IMR-90 (cell line): ENCODE measurements at regions of chr16 and their contacts with region 1.

Region 1: GRCh38 chr16:78805556-78805955 is 706.1 kb downstream of the WWOX start:
- DNase-seq: no peak
- ATAC-seq: no peak
- H3K4me3 ChIP-seq: no peak overlapping the region
- H3K27ac ChIP-seq: no peak overlapping the region
- H3K4me1 ChIP-seq: no peaks in the 10 kb centered on the region
- H3K27me3 ChIP-seq: no peaks in the 10 kb centered on the region
- CTCF ChIP-seq: no peak
- POLR2A ChIP-seq: no peak
- RAD21 ChIP-seq: no peak

Region 2: DNA sequence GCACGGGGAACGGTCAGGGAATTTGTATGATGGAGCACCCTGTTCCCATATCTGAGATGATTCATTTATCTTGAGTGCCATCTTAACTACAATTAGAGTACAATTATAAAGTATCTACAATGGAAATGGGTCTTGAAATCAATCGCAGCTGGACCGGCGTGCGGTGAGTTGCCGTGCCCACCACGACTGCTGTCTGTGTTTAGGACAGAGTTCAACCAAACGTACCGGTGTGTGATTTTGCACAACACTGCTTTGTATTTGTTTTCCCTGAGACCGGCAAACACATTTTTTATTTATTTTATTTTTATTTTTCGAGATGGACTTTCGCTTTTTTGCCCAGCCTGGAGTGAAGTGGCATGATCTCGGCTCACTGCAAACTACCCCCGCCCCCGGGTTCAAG is 249.1 kb before region 1 on chr16:
- CTCF ChIA-PET with region 1: no interaction called
- POLR2A ChIA-PET with region 1: no interaction called
- dilution Hi-C with region 1: no loop called
- in situ Hi-C with region 1: no loop called
- intact Hi-C with region 1: loop called (anchors 5 kb)
- DNase-seq: no peak
- ATAC-seq: no peak
- H3K4me3 ChIP-seq: no peak overlapping the region
- H3K27ac ChIP-seq: no peak overlapping the region
- H3K4me1 ChIP-seq: no peaks in the 10 kb centered on the region
- H3K27me3 ChIP-seq: no peaks in the 10 kb centered on the region
- CTCF ChIP-seq: no peak
- POLR2A ChIP-seq: no peak
- RAD21 ChIP-seq: no peak

Region 3: DNA sequence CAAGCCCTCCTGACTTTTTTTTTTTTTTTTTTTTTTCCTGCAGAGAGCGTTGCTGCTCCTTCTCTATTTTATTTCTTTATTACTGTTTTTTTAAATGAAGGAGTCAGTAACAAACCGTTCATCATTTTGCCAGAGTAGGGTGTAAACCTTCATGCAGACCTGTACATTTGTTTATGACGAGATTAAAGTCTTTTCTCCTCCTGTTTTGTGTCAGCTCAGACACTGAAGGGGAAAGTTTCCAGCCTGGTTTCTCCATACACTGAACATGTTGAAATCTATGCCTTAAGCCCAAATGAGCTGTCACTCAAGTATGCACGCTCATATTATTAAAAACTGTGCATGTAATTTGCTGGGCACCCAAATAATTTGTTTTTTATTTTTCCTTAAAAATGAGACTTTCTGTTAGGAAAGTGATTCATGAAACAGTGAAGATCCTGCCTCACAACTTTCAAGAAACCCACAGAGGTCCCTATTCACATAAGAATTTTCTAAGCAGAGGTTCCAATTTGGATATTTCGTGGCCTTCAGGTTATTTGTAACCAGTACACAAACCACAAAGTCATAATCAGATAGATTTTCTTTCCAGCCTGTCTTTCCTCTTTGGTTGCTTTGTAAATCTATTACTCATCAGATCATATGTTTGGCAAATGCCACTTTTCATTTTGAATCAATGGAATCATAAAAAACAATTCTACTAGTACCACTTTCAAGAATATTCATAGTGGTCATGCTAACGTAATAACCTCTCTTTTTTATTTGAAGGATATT is 94.7 kb after region 1 on chr16:
- CTCF ChIA-PET with region 1: no interaction called
- POLR2A ChIA-PET with region 1: no interaction called
- dilution Hi-C with region 1: no loop called
- in situ Hi-C with region 1: no loop called
- intact Hi-C with region 1: no loop called
- DNase-seq: no peak
- ATAC-seq: no peak
- H3K4me3 ChIP-seq: no peak overlapping the region
- H3K27ac ChIP-seq: no peak overlapping the region
- H3K4me1 ChIP-seq: no peaks in the 10 kb centered on the region
- H3K27me3 ChIP-seq: no peaks in the 10 kb centered on the region
- CTCF ChIP-seq: no peak
- POLR2A ChIP-seq: no peak
- RAD21 ChIP-seq: no peak